Caco-2 (cell line): ENCODE measurements at regions of chr3 and their contacts with region 1.

Region 1: GRCh38 chr3:12706504-12707253 is 42.8 kb upstream of the RAF1 start:
- DNase-seq: peak; percentile 74 to 79
- H3K4me3 ChIP-seq: no peak overlapping the region
- H3K4me3 Mint-ChIP-seq: no peak overlapping the region
- H3K27ac Mint-ChIP-seq: no peak overlapping the region
- H3K4me1 ChIP-seq: peaks cover 28% of the 10 kb centered on the region
- H3K4me1 Mint-ChIP-seq: no peaks in the 10 kb centered on the region
- H3K27me3 ChIP-seq: no peaks in the 10 kb centered on the region
- H3K27me3 Mint-ChIP-seq: no peaks in the 10 kb centered on the region
- CTCF ChIP-seq: peak; percentile 53 to 82

Region 2: GRCh38 chr3:12601072-12601471 is 105.6 kb before region 1 on chr3:
- CTCF ChIA-PET with region 1: no interaction called
- POLR2A ChIA-PET with region 1: no interaction called
- intact Hi-C with region 1: loop called (anchors 1 kb)
- DNase-seq: no peak
- H3K4me3 ChIP-seq: no peak overlapping the region
- H3K4me3 Mint-ChIP-seq: no peak overlapping the region
- H3K27ac Mint-ChIP-seq: no peak overlapping the region
- H3K4me1 ChIP-seq: no peaks in the 10 kb centered on the region
- H3K4me1 Mint-ChIP-seq: no peaks in the 10 kb centered on the region
- H3K27me3 ChIP-seq: no peaks in the 10 kb centered on the region
- H3K27me3 Mint-ChIP-seq: no peaks in the 10 kb centered on the region
- CTCF ChIP-seq: peak in 1 of 2 experiments; percentile 28

Region 3: GRCh38 chr3:12663936-12664908 is 42.5 kb before region 1 on chr3 and contains the start of gene RAF1:
- CTCF ChIA-PET with region 1: no interaction called
- POLR2A ChIA-PET with region 1: interaction called, 3 read pairs
- intact Hi-C with region 1: loop called (anchors 5 kb)
- DNase-seq: peak; percentile 98 to 99
- H3K4me3 ChIP-seq: peak within 1 kb of the TSS; percentile 73
- H3K4me3 Mint-ChIP-seq: peak within 1 kb of the TSS; percentile 81
- H3K27ac Mint-ChIP-seq: peak within 1 kb of the TSS; percentile 100
- H3K4me1 ChIP-seq: peaks cover 19% of the 10 kb centered on the region
- H3K4me1 Mint-ChIP-seq: peaks cover 21% of the 10 kb centered on the region
- H3K27me3 ChIP-seq: no peaks in the 10 kb centered on the region
- H3K27me3 Mint-ChIP-seq: no peaks in the 10 kb centered on the region
- CTCF ChIP-seq: no peak
- total RNA-seq, gene RAF1: 93.6 and 98.7 TPM in 2 replicates

Region 4: GRCh38 chr3:12719984-12720898 is 13.6 kb after region 1 on chr3:
- CTCF ChIA-PET with region 1: interaction called, 5 read pairs
- POLR2A ChIA-PET with region 1: no interaction called
- intact Hi-C with region 1: loop called (anchors 1 kb)
- DNase-seq: peak; percentile 83 to 88
- H3K4me3 ChIP-seq: peak overlapping the region; percentile 6
- H3K4me3 Mint-ChIP-seq: peak overlapping the region; percentile 53
- H3K27ac Mint-ChIP-seq: peak overlapping the region; percentile 57
- H3K4me1 ChIP-seq: peaks cover 4% of the 10 kb centered on the region; the same call in 1 of the 2 replicates
- H3K4me1 Mint-ChIP-seq: peaks cover 14% of the 10 kb centered on the region
- H3K27me3 ChIP-seq: no peaks in the 10 kb centered on the region
- H3K27me3 Mint-ChIP-seq: no peaks in the 10 kb centered on the region
- CTCF ChIP-seq: peak; percentile 79 to 93

Region 5: DNA sequence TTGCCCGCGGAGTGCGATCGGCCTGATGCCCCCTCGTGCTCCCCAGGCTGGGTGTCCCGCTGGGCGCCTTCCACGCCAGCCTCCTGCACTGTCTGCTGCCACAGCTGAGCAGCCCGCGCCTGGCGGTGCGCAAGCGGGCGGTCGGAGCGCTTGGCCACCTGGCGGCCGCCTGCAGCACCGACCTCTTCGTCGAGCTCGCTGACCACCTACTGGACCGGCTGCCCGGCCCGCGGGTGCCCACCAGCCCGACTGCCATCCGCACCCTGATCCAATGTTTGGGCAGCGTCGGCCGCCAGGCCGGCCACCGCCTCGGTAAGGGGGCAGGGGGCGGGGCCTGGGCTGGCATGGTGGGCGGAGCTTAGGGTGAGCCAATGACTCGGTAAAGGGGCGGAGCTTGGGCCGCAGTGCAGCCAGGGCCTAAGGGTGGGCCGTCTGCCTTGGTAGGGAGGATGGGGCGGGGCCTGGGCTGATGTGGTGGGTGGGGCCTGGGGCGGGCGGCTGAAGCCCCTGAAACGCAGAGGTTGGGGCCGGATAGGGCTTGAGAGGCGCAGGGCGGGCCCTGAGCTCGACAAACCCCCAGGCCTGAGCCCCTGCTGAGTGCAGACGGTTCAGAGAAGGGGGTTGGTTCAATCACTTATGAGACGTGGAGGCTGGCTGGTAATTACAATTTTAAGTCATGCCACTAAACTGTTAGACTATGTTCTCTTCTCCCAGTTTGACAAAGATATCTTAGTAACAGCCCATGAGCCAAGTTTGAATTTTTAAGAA is 103.5 kb after region 1 on chr3:
- CTCF ChIA-PET with region 1: interaction called, 7 read pairs
- POLR2A ChIA-PET with region 1: no interaction called
- intact Hi-C with region 1: loop called (anchors 5 kb)
- DNase-seq: peak; percentile 94 to 95
- H3K4me3 ChIP-seq: peak overlapping the region; percentile 53
- H3K4me3 Mint-ChIP-seq: peak overlapping the region; percentile 66
- H3K27ac Mint-ChIP-seq: no peak overlapping the region
- H3K4me1 ChIP-seq: 0 out of 2 replicates have a peak, but pooled peaks cover 4% of the 10 kb centered on the region
- H3K4me1 Mint-ChIP-seq: no peaks in the 10 kb centered on the region
- H3K27me3 ChIP-seq: no peaks in the 10 kb centered on the region
- H3K27me3 Mint-ChIP-seq: peaks cover 4% of the 10 kb centered on the region
- CTCF ChIP-seq: peak; percentile 48 to 80